Activated CD8-positive, alpha-beta T cell treated with anti-CD3 and anti-CD28 coated beads for 36 hours (primary cell): ENCODE measurements at regions of chr7 and their contacts with region 1.

Region 1: GRCh38 chr7:97006036-97006815 is 873 bp downstream of the DLX6 start:
- DNase-seq: peak; percentile 49
- ATAC-seq: peak; percentile 68
- H3K4me3 Mint-ChIP-seq: peak overlapping the region; percentile 66
- H3K27ac Mint-ChIP-seq: no peak overlapping the region
- H3K4me1 Mint-ChIP-seq: peaks cover 17% of the 10 kb centered on the region
- H3K27me3 Mint-ChIP-seq: peaks cover 80% of the 10 kb centered on the region
- CTCF ChIP-seq: no peak

Region 2: GRCh38 chr7:96837593-96837992 is 168.6 kb before region 1 on chr7:
- CTCF ChIA-PET with region 1: no interaction called
- POLR2A ChIA-PET with region 1: no interaction called
- intact Hi-C with region 1: loop called (anchors 10 kb)
- DNase-seq: peak; percentile 62
- ATAC-seq: peak; percentile 96
- H3K4me3 Mint-ChIP-seq: peak overlapping the region; percentile 4
- H3K27ac Mint-ChIP-seq: no peak overlapping the region
- H3K4me1 Mint-ChIP-seq: peaks cover 31% of the 10 kb centered on the region
- H3K27me3 Mint-ChIP-seq: peaks cover 47% of the 10 kb centered on the region
- CTCF ChIP-seq: no peak

Region 3: GRCh38 chr7:96962221-96962885 is 43.9 kb before region 1 on chr7:
- CTCF ChIA-PET with region 1: no interaction called
- POLR2A ChIA-PET with region 1: no interaction called
- intact Hi-C with region 1: no loop called
- DNase-seq: no peak
- ATAC-seq: no peak
- H3K4me3 Mint-ChIP-seq: no peak overlapping the region
- H3K27ac Mint-ChIP-seq: no peak overlapping the region
- H3K4me1 Mint-ChIP-seq: no peaks in the 10 kb centered on the region
- H3K27me3 Mint-ChIP-seq: peaks cover 32% of the 10 kb centered on the region
- CTCF ChIP-seq: no peak